ENCODE measurements at regions of chr14 and their contacts with region 1.

Region 1: GRCh38 chr14:76947078-76947837 is 81.2 kb downstream of the IRF2BPL start:
- DNase-seq: peak; percentile 89 to 99 (median 94)

Region 2: DNA sequence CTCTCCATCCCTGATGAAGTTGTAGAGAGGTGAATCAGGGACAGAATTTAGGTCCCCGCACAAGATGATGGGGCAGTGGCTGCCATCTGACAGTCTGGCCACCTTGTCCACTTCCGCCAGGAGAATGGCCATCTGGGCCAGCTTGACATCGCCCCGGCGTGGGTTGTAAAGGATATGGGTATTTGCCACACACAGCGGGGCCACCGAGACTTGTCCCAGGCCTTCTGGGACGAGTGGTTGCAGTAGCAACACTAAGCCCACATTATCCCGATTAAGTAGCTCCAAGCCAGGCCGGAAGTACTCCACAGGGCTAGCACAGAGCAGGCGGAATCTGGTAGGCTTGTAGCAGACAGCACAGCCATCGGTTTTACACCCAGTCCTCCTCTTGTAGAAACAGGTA is 140.8 kb before region 1 on chr14:
- intact Hi-C with region 1: no loop called
- DNase-seq: no peak

Region 3: GRCh38 chr14:76918751-76919543 is 28.3 kb before region 1 on chr14:
- intact Hi-C with region 1: loop called (anchors 2 kb)
- DNase-seq: peak; percentile 81 to 98 (median 88)

Region 4: GRCh38 chr14:77067632-77068514 is 120.6 kb after region 1 on chr14:
- intact Hi-C with region 1: loop called (anchors 1 kb)
- DNase-seq: peak; percentile 67 to 97 (median 77)